Ascending aorta (tissue), 2 donors: ENCODE measurements at regions of chr5 and their contacts with region 1.

Region 1: DNA sequence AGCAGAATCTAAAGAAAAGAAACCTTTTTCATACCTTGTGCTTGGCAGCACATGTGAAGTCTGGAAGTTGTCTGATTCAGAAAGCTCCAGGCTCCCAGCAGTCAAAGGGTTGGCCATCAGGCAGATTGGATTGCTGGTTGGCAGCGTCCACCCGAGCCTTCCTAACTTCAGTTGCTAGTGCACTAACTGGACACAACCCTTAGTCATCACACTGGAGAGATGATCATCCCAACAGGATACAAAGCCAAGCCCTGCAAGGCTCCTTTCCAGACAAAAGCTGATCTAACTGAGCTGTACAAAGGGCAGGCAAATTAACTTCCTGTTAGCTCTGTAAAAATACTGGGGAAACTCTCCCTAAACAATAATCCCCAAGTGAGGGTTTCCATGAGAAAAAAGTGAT is 185.6 kb downstream of the SNX18 start:
- DNase-seq: peak in 1 of 2 donors; percentile 88
- H3K4me3 ChIP-seq: peak overlapping the region; percentile 31 to 50
- H3K27ac ChIP-seq: peak overlapping the region; percentile 76 to 88
- H3K4me1 ChIP-seq: peaks cover 6 to 54% of the 10 kb centered on the region in 2 donors
- H3K27me3 ChIP-seq: no peaks in the 10 kb centered on the region
- CTCF ChIP-seq: no peak

Region 2: DNA sequence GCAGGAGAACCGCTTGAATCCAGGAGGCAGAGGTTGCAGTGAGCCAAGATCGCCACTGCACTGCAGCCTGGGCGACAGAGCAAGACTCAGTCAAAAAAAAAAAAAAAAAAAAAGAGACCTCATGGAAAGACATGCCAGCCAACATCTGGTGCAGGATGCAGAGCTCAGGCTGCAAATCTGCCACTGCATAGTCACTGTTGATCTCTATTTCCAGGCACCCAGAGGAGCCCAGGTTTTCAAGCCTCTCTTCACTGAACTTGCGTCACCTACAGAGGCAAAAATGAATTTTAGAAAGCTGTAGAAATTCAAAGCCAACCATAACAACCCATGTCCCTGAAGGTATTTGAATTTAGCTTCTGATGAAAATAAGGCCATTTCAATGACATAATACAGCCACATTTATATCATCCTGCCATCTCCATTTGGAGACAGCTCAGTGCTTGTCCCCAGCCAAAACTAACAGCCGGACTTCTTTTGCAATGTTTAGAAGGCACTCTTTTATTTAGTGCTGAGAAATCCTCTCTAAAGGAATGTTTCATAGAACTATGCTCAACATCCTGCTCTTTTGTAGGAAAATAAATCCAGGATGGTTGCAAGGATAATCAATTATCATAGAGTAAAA is 72.3 kb before region 1 on chr5:
- intact Hi-C with region 1: loop called (anchors 2 kb)
- DNase-seq: peak in 1 of 2 donors; percentile 88
- H3K4me3 ChIP-seq: no peak overlapping the region
- H3K27ac ChIP-seq: peak overlapping the region; percentile 79 to 83
- H3K4me1 ChIP-seq: peaks cover 6 to 25% of the 10 kb centered on the region in 2 donors
- H3K27me3 ChIP-seq: no peaks in the 10 kb centered on the region
- CTCF ChIP-seq: peak in 1 of 3 experiments; percentile 11

Region 3: GRCh38 chr5:54658014-54658413 is 45.1 kb before region 1 on chr5:
- intact Hi-C with region 1: loop called (anchors 2 kb)
- DNase-seq: no peak
- H3K4me3 ChIP-seq: no peak overlapping the region
- H3K27ac ChIP-seq: peak overlapping the region; percentile 35 to 83
- H3K4me1 ChIP-seq: peaks cover 3 to 41% of the 10 kb centered on the region in 2 donors
- H3K27me3 ChIP-seq: no peaks in the 10 kb centered on the region
- CTCF ChIP-seq: no peak

Region 4: DNA sequence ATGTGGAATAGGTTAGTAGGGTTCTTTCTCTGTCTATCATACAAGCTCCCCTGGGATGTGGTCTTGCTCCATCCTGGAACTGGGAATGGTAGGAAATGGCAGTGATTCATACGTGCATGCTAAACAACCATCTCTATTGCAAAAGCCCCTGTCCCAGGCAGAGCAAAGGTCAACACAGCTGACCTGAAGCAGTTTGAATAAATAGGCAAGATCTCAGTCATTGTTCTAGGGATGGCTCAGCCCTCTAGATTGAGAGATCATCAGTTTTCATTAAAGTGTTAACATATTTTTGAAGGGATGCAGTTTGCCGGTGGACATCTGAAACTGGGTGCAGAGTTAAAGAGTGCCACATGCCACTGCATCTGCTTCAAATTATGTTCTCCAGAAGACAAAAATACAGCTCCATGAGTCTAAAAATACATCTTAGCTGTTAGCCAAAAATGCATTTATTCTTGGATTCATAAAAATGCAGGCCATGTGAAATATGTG is 58.1 kb after region 1 on chr5:
- intact Hi-C with region 1: loop called (anchors 5 kb)
- DNase-seq: peak in 1 of 2 donors; percentile 85
- H3K4me3 ChIP-seq: no peak overlapping the region
- H3K27ac ChIP-seq: peak overlapping the region; percentile 52 to 75
- H3K4me1 ChIP-seq: peaks cover 0 to 20% of the 10 kb centered on the region in 2 donors
- H3K27me3 ChIP-seq: no peaks in the 10 kb centered on the region
- CTCF ChIP-seq: no peak

Region 5: GRCh38 chr5:54844905-54845566 is 141.9 kb after region 1 on chr5:
- intact Hi-C with region 1: loop called (anchors 5 kb)
- DNase-seq: no peak
- H3K4me3 ChIP-seq: peak overlapping the region; percentile 23 to 53
- H3K27ac ChIP-seq: peak overlapping the region; percentile 76 to 80
- H3K4me1 ChIP-seq: peaks cover 0 to 12% of the 10 kb centered on the region in 2 donors
- H3K27me3 ChIP-seq: no peaks in the 10 kb centered on the region
- CTCF ChIP-seq: peak; percentile 46 to 62 (median 55)